ENCODE measurements at regions of chr1 and their contacts with region 1.

Region 1: GRCh38 chr1:168082008-168082876 is 54.5 kb downstream of the GPR161 start:
- DNase-seq: peak; percentile 55 to 65
- ATAC-seq: peak; percentile 36 to 75 (median 64)
- H3K4me3 ChIP-seq: no peak overlapping the region
- H3K27ac ChIP-seq: peak overlapping the region in 4 of 10 donors; percentile 55 to 73 (median 63)
- H3K4me1 ChIP-seq: peaks cover 2 to 68% (median 25%) of the 10 kb centered on the region in 9 donors
- H3K27me3 ChIP-seq: no peaks in the 10 kb centered on the region
- CTCF ChIP-seq: peak; percentile 74 to 93 (median 87)

Region 2: GRCh38 chr1:167715157-167715999 is 366.9 kb before region 1 on chr1:
- intact Hi-C with region 1: loop called in 5 of 10 experiments (anchors 5 to 10 kb)
- DNase-seq: peak; percentile 77 to 90
- ATAC-seq: peak; percentile 36 to 80 (median 65)
- H3K4me3 ChIP-seq: peak overlapping the region; percentile 54 to 84 (median 72)
- H3K27ac ChIP-seq: peak overlapping the region; percentile 80 to 94 (median 88)
- H3K4me1 ChIP-seq: peaks cover 0 to 31% (median 6%) of the 10 kb centered on the region in 9 donors
- H3K27me3 ChIP-seq: no peaks in the 10 kb centered on the region
- CTCF ChIP-seq: peak; percentile 58 to 94 (median 78)

Region 3: GRCh38 chr1:167803358-167804207 is 278.7 kb before region 1 on chr1:
- intact Hi-C with region 1: loop called in 2 of 10 experiments (anchors 5 to 10 kb)
- DNase-seq: peak; percentile 92
- ATAC-seq: peak; percentile 94 to 98 (median 96)
- H3K4me3 ChIP-seq: peak overlapping the region in 1 of 10 donors; percentile 28
- H3K27ac ChIP-seq: peak overlapping the region in 2 of 10 donors; percentile 3 to 45
- H3K4me1 ChIP-seq: peaks cover 0 to 22% (median 6%) of the 10 kb centered on the region in 9 donors
- H3K27me3 ChIP-seq: no peaks in the 10 kb centered on the region
- CTCF ChIP-seq: peak; percentile 88 to 99 (median 97)

Region 4: DNA sequence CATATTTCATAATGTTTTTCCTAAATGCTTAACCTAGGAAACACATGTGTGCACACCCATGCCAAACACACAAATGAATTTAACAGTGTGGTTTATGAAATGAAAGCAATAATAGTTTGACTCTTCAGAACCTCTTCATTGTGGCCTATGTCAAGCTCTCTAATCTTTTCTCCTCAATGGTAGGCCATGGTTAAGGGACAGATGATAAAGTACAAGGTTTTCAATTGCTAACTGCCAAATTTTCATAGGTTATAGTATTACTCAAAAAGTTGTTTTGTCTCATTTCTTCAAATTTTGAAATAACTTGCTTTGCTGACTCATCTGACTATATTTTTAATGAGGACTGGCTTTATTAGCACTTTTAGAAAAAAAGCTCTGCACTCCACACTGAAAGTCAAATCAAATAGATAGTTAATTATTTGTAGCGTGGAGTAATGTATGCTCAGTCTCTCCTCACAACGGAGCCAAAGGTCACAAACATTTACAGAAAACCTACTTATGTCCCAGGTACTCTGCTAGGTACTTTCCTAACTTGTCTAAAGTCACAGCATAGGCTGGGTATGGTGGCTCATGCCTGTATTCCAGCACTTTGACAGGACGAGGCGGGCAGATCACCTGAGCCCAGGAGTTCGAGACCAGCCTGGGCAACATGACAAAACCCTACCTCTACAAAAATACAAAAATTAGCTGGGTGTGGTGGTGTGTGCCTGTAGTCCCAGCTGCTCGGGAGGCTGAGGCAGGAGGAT is 165.3 kb before region 1 on chr1:
- intact Hi-C with region 1: no loop called
- DNase-seq: no peak
- ATAC-seq: no peak
- H3K4me3 ChIP-seq: no peak overlapping the region
- H3K27ac ChIP-seq: no peak overlapping the region
- H3K4me1 ChIP-seq: peaks cover 0 to 10% (median 4%) of the 10 kb centered on the region in 9 donors
- H3K27me3 ChIP-seq: no peaks in the 10 kb centered on the region
- CTCF ChIP-seq: no peak

Region 5: DNA sequence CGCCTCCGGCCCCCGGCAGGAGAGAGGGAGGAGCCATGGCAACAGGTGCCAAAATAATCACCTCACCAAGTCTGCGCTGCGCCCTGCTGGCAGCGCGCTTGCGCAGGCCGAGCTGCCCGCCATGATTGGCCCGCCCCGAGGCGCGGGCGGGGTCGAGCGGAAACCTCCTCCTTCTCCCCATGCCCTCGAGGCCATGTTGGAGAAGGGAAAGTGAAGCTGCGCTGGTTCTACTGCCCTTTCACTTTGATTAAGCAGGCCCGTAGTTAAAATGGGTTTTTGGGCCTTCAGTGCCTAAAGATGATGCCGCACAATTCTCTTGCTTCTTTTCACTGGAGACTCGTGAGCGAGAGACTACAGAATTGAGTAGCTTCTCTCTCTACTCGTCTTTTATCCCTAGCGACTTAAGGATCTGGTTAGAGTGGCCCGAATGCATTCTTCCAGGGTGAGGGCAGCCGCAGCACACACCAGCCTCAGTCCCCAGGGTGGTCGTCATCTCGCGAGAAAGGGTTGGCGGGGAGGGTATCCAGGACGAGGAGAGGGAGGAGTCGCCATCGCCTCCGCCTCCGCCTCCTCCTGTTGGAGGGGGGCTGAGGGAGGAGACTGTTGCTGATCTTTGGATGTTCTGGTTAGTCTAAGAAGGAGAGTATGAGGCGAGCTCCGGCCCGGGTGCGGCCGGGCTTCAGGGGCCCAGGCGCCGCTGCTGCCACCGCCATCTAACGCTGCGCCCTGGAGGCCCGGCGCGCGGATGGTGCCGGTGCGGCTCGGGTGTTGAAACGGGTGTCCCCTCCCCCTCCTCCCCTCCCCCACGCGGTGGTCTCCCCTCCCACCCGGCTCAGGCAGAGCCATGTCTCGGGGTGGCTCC is 145.9 kb before region 1 on chr1 and contains the start of gene DCAF6:
- intact Hi-C with region 1: loop called in 5 of 10 experiments (anchors 5 to 10 kb)
- DNase-seq: peak; percentile 96 to 98
- ATAC-seq: peak; percentile 91 to 96 (median 94)
- H3K4me3 ChIP-seq: peak within 1 kb of the TSS; percentile 57 to 99 (median 88)
- H3K27ac ChIP-seq: peak within 1 kb of the TSS; percentile 91 to 99 (median 97)
- H3K4me1 ChIP-seq: peaks cover 0 to 54% (median 47%) of the 10 kb centered on the region in 9 donors
- H3K27me3 ChIP-seq: no peaks in the 10 kb centered on the region
- CTCF ChIP-seq: no peak
- total RNA-seq, gene DCAF6: 155 to 226 (median 205) TPM

Region 6: GRCh38 chr1:168145184-168146159 is 63.2 kb after region 1 on chr1:
- intact Hi-C with region 1: loop called in 2 of 10 experiments (anchors 2 to 5 kb)
- DNase-seq: peak; percentile 83 to 89
- ATAC-seq: peak; percentile 81 to 97 (median 94)
- H3K4me3 ChIP-seq: peak overlapping the region in 1 of 10 donors; percentile 15
- H3K27ac ChIP-seq: peak overlapping the region in 2 of 10 donors; percentile 8 to 15
- H3K4me1 ChIP-seq: peaks cover 0 to 6% (median 4%) of the 10 kb centered on the region in 9 donors
- H3K27me3 ChIP-seq: no peaks in the 10 kb centered on the region
- CTCF ChIP-seq: peak; percentile 90 to 96 (median 94)

Region 7: DNA sequence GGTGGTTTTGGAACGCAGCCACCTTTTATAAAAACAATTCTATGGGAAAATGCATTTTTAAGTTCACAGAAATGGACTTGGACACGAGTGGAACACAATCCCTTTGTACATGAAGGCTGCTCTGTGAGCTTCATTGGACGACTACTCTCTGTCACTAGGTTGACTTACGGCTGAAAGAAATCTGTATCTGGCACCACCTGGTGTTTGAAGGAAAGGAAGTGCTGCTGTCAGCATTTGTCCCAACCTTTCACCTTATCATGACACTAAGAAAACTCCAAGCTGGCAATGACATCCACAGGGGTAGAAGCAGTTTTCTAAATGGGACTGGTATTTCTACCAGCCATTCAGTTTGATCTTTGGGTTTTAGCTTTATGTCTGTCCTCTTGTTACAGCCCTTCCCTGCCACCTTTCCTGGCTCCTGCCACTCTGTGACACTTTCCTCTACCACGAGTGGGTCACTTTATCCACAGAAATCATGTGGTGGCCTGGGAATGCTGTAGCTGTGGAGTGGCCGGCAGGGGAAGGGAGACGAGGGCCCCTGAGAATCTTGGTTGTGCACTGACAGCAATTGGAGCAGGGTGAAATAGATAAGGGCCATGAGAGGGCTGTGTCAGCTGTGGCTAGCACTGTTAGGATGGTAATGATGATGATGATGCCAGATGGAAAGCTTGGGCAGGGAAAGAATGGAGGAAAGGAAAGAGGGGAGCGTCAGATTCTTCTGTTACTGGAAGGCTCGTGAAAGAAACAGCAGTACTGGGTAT is 283.7 kb after region 1 on chr1:
- intact Hi-C with region 1: no loop called
- DNase-seq: no peak
- ATAC-seq: peak in 1 of 8 donors; percentile 59
- H3K4me3 ChIP-seq: no peak overlapping the region
- H3K27ac ChIP-seq: no peak overlapping the region
- H3K4me1 ChIP-seq: peaks cover 0 to 9% (median 0%) of the 10 kb centered on the region in 9 donors
- H3K27me3 ChIP-seq: no peaks in the 10 kb centered on the region
- CTCF ChIP-seq: peak in 4 of 9 donors; percentile 12 to 28 (median 20)

Measured in heart right ventricle (tissue), 16 donors.